HepG2 (cell line): ENCODE measurements at regions of chr11 and their contacts with region 1.

Region 1: DNA sequence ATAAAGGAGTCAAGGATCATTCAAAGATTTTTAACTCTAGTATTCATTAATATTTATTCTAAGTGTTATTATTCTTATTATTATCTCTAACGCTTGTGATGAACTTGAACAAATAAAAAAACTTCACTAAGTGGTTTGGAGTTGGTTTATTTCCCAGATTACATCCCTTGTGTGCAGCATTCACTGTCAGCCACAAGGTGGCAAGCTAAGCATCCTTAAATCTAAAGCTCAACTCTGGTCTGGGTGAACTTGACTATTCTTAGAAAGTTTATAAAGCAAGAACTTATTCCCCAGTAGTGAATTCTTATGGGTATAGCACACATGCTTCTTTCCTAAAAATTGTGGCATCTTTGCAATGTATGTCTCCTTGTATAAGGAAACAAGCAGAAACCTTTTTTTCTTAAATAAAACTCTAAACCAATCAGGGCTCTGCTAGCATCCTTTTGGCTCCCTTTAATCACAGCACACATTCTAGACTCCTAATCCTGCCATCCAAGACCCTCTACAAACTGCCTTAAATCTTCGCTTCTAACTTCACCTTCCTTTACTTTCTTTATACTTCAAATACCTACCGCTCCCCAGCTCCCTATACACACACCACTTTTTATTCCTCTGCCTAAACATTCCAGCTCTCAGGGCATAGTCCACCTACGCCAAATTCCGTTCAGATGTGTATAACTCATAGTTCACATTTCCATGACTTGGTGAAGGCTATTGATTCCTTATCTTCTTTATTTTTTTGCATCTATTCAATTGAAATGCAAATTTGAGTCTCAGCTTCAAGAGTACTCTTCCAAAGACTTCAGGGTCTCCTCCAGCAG is 1068.8 kb downstream of the DLG2 start:
- DNase-seq: peak; percentile 80
- ATAC-seq: peak; percentile 99
- H3K4me3 ChIP-seq: no peak overlapping the region
- H3K27ac ChIP-seq: no peak overlapping the region
- H3K4me1 ChIP-seq: peaks cover 12% of the 10 kb centered on the region
- H3K27me3 ChIP-seq: no peaks in the 10 kb centered on the region
- CTCF ChIP-seq: peak; percentile 76
- EP300 ChIP-seq: no peak
- POLR2A ChIP-seq: no peak
- RAD21 ChIP-seq: peak; percentile 60

Region 2: GRCh38 chr11:84212468-84213390 is 345.6 kb before region 1 on chr11:
- CTCF ChIA-PET with region 1: no interaction called
- POLR2A ChIA-PET with region 1: no interaction called
- in situ Hi-C with region 1: no loop called
- intact Hi-C with region 1: no loop called
- DNase-seq: peak; percentile 27
- ATAC-seq: peak; percentile 96
- H3K4me3 ChIP-seq: peak overlapping the region; percentile 60 to 65 (median 62)
- H3K27ac ChIP-seq: no peak overlapping the region
- H3K4me1 ChIP-seq: no peaks in the 10 kb centered on the region
- H3K27me3 ChIP-seq: no peaks in the 10 kb centered on the region
- CTCF ChIP-seq: no peak
- EP300 ChIP-seq: no peak
- POLR2A ChIP-seq: no peak
- RAD21 ChIP-seq: no peak

Region 3: GRCh38 chr11:84648471-84648870 is 90.2 kb after region 1 on chr11:
- CTCF ChIA-PET with region 1: no interaction called
- POLR2A ChIA-PET with region 1: no interaction called
- in situ Hi-C with region 1: no loop called
- intact Hi-C with region 1: no loop called
- DNase-seq: no peak
- ATAC-seq: no peak
- H3K4me3 ChIP-seq: no peak overlapping the region
- H3K27ac ChIP-seq: no peak overlapping the region
- H3K4me1 ChIP-seq: no peaks in the 10 kb centered on the region; the same call in 1 of the 2 replicates
- H3K27me3 ChIP-seq: no peaks in the 10 kb centered on the region
- CTCF ChIP-seq: no peak
- EP300 ChIP-seq: no peak
- POLR2A ChIP-seq: no peak
- RAD21 ChIP-seq: no peak

Region 4: DNA sequence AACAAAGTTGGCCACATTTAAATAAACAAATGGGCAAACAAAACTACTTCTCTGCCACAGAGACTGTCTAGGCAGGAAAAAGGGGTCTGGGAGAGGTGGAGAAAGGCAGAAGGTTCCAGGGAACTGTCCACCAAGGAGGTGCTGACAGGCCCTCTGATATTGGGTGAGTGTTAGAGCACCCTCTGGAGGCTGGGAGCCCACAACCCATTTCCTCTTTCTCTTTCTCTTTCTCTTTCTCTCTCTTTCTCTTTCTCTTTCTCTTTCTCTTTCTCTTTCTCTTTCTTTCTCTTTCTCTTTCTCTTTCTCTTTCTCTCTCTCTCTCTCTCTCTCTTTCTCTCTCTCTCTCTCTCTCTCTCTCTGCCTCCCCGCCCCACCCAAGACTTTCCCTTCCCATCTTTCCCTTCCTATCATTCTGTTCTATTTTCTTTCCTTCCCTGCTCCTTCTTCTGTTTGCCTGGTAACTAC is 156.1 kb after region 1 on chr11:
- CTCF ChIA-PET with region 1: interaction called, 18 read pairs
- POLR2A ChIA-PET with region 1: no interaction called
- in situ Hi-C with region 1: loop called (anchors 5 kb)
- intact Hi-C with region 1: loop called (anchors 1 kb)
- DNase-seq: peak; percentile 58
- ATAC-seq: peak; percentile 92
- H3K4me3 ChIP-seq: no peak overlapping the region
- H3K27ac ChIP-seq: no peak overlapping the region
- H3K4me1 ChIP-seq: no peaks in the 10 kb centered on the region
- H3K27me3 ChIP-seq: no peaks in the 10 kb centered on the region; a peak in 1 of 5 replicates
- CTCF ChIP-seq: peak; percentile 70
- EP300 ChIP-seq: no peak
- POLR2A ChIP-seq: no peak
- RAD21 ChIP-seq: peak; percentile 35; the same call in 1 of the 2 replicates

Region 5: GRCh38 chr11:84719935-84720577 is 161.8 kb after region 1 on chr11:
- CTCF ChIA-PET with region 1: interaction called, 18 read pairs
- POLR2A ChIA-PET with region 1: no interaction called
- in situ Hi-C with region 1: loop called (anchors 5 kb)
- intact Hi-C with region 1: no loop called
- DNase-seq: no peak
- ATAC-seq: no peak
- H3K4me3 ChIP-seq: no peak overlapping the region
- H3K27ac ChIP-seq: no peak overlapping the region
- H3K4me1 ChIP-seq: no peaks in the 10 kb centered on the region
- H3K27me3 ChIP-seq: peaks cover 0 to 5% of the 10 kb centered on the region in 2 experiments; a peak in 1 of 5 replicates
- CTCF ChIP-seq: no peak
- EP300 ChIP-seq: no peak
- POLR2A ChIP-seq: no peak
- RAD21 ChIP-seq: no peak

Region 6: DNA sequence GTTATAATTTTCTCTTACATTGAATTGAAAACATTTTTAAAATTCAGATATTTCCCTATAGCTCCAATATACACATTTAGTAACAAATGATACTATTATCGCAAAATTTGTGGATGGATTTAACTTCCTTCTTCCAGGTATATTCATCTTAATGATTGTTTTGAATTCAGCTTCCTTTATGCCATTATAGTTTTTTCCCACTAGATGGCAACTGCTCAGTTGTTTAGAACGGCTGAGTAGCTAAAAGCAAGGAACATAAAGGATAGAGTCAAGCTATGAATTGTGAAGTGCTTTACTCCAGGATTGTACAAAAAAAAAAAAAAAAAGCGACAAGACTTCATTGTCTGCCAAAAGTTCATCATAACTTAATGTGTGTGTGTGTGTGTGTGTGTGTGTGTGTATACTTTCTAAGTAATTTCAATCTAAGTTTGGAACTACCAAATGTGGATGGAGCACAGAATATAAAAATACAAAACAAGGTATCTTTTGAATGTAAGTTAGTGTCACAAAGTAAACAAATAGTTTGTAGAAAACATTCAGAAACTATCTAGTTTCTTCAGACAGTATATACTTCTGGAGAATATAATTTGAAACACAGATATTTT is 222.5 kb after region 1 on chr11:
- CTCF ChIA-PET with region 1: no interaction called
- POLR2A ChIA-PET with region 1: no interaction called
- in situ Hi-C with region 1: no loop called
- intact Hi-C with region 1: loop called (anchors 1 kb)
- DNase-seq: peak; percentile 6
- ATAC-seq: peak; percentile 41; the same call in 1 of the 3 replicates
- H3K4me3 ChIP-seq: no peak overlapping the region
- H3K27ac ChIP-seq: no peak overlapping the region
- H3K4me1 ChIP-seq: no peaks in the 10 kb centered on the region
- H3K27me3 ChIP-seq: no peaks in the 10 kb centered on the region
- CTCF ChIP-seq: peak; percentile 36; the same call in 1 of the 2 replicates
- EP300 ChIP-seq: no peak
- POLR2A ChIP-seq: no peak
- RAD21 ChIP-seq: no peak